Mammary epithelial cell (primary cell): ENCODE measurements at regions of chr14 and their contacts with region 1.

Region 1: DNA sequence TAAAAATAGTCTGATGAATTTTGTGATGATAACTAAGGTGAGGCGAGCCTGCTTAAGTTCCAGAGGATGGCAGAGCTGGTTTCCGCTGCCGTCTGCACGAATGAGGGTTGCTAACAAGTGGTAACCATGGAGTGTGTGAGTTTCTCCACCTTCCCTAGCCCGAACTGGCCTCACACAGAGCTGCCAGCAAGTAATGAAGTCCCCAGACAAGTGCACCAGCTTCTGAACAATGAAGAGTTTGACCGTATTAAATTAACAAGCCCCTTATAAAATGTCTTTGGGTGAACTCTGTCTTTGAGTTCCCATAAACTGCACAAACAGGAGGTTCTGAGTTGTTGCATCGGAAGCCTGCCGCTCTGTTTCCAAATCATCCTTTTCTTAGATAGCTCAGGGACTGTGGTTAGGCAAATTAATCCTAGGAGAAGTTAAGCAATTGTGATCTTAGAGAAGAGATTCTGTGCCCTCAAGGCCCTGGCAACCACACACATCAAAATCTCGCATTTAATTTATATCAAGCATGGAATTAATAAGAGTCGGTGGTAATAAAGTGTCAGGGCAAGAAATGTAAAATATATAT is 274.1 kb upstream of the DAAM1 start:
- DNase-seq: no peak
- H3K4me3 ChIP-seq: no peak overlapping the region
- H3K27ac ChIP-seq: no peak overlapping the region
- H3K4me1 ChIP-seq: peaks cover 20% of the 10 kb centered on the region
- H3K27me3 ChIP-seq: no peaks in the 10 kb centered on the region
- CTCF ChIP-seq: no peak

Region 2: DNA sequence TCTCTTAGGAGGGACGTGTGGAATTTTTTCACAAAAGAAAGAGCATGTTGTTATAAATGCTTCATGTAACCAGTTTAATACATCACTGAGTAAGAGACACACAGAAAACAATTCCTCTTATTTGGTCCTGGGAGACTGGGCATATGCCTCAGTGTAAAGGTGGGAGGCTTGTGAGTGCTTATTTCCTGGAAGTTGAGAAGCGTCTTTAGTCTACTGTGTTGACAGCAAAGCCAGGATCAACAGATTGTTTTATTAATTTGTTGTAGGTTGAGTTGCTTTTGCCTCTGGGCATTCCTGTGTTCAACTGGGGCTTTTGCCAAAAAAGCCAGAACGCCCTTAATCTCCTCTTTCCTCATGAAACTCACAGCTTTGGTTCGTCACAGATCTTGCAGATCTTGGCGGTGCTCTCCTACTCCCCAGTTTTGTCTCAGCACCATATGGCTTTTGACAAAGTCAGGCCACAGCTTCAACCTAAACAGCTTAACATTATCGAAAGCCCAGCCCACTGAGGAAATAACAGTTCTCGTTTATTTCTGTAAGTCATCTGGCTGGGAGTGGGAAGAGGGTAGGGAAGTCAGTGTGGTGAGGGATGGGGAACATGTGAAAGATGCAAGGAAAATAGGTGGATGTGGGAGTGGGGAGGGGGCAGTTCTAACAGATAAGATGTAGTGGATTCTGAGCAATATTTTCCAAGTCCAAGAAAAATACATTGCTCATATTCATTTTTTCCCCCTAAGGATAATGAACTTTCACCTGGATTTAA is 49.4 kb before region 1 on chr14:
- CTCF ChIA-PET with region 1: no interaction called
- dilution Hi-C with region 1: loop called (anchors 5 kb)
- in situ Hi-C with region 1: no loop called
- intact Hi-C with region 1: no loop called
- DNase-seq: no peak
- H3K4me3 ChIP-seq: no peak overlapping the region
- H3K27ac ChIP-seq: no peak overlapping the region
- H3K4me1 ChIP-seq: no peaks in the 10 kb centered on the region
- H3K27me3 ChIP-seq: peaks cover 2% of the 10 kb centered on the region
- CTCF ChIP-seq: no peak